IMR-90 (cell line): ENCODE measurements at regions of chr2 and their contacts with region 1.

Region 1: DNA sequence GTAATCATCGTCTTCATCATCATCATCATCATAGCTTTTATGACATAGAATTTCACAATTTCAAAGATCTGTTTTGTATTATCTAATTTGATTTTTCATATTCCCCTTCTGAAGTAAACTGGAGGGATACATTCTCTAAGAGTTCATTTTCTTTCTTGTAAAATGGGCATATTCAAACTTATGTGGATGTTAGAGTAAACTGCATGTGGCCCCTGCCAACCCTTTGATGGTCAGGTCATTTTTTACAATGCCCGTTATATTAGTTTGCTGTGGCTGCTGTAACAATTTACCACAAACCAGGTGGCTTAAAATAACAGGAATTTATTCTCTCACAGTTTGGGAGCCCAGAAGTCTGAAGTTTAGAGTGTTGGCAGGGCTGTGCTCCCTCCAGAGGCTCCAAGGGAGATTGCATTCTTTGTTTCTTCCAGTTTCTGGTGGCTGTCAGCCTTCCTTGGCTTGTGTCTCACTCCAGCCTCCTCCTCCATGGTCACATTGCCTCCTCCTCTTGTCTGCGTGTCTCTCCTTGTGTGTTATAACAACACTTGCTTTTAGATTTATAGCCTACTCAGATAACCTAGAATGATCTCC is 127.5 kb upstream of the MMADHC start:
- DNase-seq: peak; percentile 55
- ATAC-seq: peak; percentile 80
- H3K4me3 ChIP-seq: no peak overlapping the region
- H3K27ac ChIP-seq: no peak overlapping the region
- H3K4me1 ChIP-seq: no peaks in the 10 kb centered on the region; the same call in 1 of the 2 replicates
- H3K27me3 ChIP-seq: no peaks in the 10 kb centered on the region
- CTCF ChIP-seq: peak; percentile 64
- POLR2A ChIP-seq: no peak
- RAD21 ChIP-seq: peak; percentile 68

Region 2: GRCh38 chr2:149858901-149859634 is 144.0 kb after region 1 on chr2:
- CTCF ChIA-PET with region 1: no interaction called
- POLR2A ChIA-PET with region 1: interaction called, 17 read pairs
- dilution Hi-C with region 1: no loop called
- in situ Hi-C with region 1: no loop called
- intact Hi-C with region 1: no loop called
- DNase-seq: peak; percentile 75
- ATAC-seq: peak; percentile 72
- H3K4me3 ChIP-seq: no peak overlapping the region
- H3K27ac ChIP-seq: peak overlapping the region; percentile 62; the same call in 1 of the 2 replicates
- H3K4me1 ChIP-seq: peaks cover 10% of the 10 kb centered on the region
- H3K27me3 ChIP-seq: no peaks in the 10 kb centered on the region
- CTCF ChIP-seq: no peak
- POLR2A ChIP-seq: no peak
- RAD21 ChIP-seq: no peak